ENCODE measurements at regions of chr4 and their contacts with region 1.

Region 1: GRCh38 chr4:150078637-150079581 is 664 bp downstream of the DCLK2 start:
- DNase-seq: peak; percentile 72
- ATAC-seq: peak; percentile 70

Region 2: GRCh38 chr4:149120331-149121022 is 958.4 kb before region 1 on chr4:
- intact Hi-C with region 1: no loop called
- DNase-seq: no peak
- ATAC-seq: no peak

Region 3: DNA sequence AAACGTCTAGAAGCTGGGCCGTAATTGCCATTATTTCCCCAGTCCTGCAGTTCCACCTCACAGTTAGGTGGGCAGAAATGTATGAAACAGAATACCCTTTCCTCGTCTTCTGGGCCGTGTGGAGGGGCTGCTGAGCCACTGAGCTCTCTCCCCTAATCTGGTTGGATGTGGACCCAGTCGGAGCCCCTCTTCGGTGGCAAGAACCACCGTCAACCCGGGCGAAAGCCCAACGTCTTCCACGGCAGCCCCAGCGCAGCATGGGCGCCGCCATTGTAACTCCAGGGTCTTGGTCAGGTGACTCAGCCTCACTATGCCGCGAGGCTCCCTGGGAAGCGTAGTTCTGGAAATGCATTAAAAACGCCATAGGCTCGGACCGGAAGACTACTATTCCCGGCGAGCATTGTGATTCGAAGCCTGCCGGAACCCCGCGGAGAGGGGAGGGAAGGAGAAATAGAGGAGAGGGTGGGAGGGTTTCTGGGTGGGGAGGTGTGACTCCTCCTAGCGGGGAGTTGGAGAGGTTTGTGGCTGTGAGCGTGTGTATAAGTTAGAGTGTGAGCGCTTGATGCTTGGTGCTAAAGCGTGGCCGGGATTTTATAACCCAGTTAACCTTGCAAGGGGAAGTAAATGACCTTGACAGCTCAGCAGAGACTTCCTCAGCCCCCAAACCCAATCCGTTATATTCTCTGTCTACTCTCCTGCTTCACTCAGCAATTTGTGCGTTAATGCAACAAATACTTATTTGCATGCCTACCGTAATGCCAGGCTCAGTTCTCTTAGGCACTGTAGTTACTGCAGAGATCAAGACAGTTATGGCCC is 1682.0 kb after region 1 on chr4 and contains the start of gene GATB:
- intact Hi-C with region 1: loop called (anchors 5 kb)
- DNase-seq: peak; percentile 94
- ATAC-seq: peak; percentile 100
- total RNA-seq, gene GATB: 51.9 TPM

Measured in sciatic nerve (tissue), 2 donors.